B cell (primary cell): ENCODE measurements at regions of chr4 and their contacts with region 1.

Region 1: GRCh38 chr4:986879-987623 is at the start of gene IDUA:
- DNase-seq: peak; percentile 93
- ATAC-seq: peak; percentile 84
- H3K4me3 ChIP-seq: peak within 1 kb of the TSS; percentile 52 to 83 (median 68)
- H3K4me3 Mint-ChIP-seq: peak within 1 kb of the TSS; percentile 91
- H3K27ac ChIP-seq: peak within 1 kb of the TSS; percentile 19 to 76
- H3K27ac Mint-ChIP-seq: peak within 1 kb of the TSS; percentile 88
- H3K4me1 ChIP-seq: peaks cover 25 to 26% of the 10 kb centered on the region in 2 donors
- H3K4me1 Mint-ChIP-seq: peaks cover 23% of the 10 kb centered on the region
- H3K27me3 ChIP-seq: no peaks in the 10 kb centered on the region
- H3K27me3 Mint-ChIP-seq: no peaks in the 10 kb centered on the region
- CTCF ChIP-seq: peak; percentile 82
- total RNA-seq, gene IDUA: 57.8 and 67.4 TPM in 2 replicates

Region 2: DNA sequence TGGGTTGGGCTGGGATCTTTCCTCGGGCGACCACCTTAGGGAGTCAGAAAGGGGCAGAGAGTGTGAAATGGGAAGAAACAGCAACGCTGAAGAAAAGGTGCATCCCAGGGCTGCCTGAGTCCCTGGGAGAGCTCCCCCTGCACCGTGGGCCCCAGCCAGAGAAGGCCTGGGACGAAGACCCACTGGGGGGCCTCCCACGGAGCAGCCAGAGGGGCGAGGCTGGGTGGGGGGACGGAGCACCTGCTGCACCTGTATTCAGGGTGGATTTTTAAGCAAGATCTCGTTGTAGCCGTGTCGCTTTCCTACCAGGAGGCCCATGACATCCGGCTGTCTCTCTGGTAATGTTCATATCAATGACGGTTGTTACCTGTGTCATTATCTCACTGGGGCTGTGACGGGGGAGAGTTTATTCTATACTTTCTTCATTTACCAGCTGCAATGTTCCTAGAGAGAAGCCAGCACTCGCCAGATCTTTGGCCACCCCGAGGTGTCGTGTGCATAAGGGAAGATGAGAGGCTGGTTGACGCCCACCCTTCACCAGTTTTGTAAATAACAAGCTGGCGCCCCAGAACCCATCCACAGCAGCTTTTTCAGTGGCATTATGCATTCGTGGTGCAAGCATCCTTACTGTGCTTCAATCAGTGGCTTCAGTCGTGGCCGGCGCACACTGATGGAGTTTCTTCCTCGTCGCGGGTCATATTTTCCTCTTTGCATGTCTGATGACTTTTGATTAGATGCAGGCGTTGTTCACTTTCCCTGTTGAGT is 287.1 kb before region 1 on chr4:
- CTCF ChIA-PET with region 1: interaction called, 3 read pairs
- POLR2A ChIA-PET with region 1: no interaction called
- intact Hi-C with region 1: loop called (anchors 1 kb)
- DNase-seq: no peak
- ATAC-seq: no peak
- H3K4me3 ChIP-seq: peak overlapping the region in 1 of 5 experiments; percentile 48
- H3K4me3 Mint-ChIP-seq: peak overlapping the region; percentile 77
- H3K27ac ChIP-seq: peak overlapping the region; percentile 68 to 73
- H3K27ac Mint-ChIP-seq: peak overlapping the region; percentile 80
- H3K4me1 ChIP-seq: peaks cover 18 to 24% of the 10 kb centered on the region in 2 donors
- H3K4me1 Mint-ChIP-seq: peaks cover 22% of the 10 kb centered on the region
- H3K27me3 ChIP-seq: no peaks in the 10 kb centered on the region
- H3K27me3 Mint-ChIP-seq: no peaks in the 10 kb centered on the region
- CTCF ChIP-seq: no peak

Region 3: DNA sequence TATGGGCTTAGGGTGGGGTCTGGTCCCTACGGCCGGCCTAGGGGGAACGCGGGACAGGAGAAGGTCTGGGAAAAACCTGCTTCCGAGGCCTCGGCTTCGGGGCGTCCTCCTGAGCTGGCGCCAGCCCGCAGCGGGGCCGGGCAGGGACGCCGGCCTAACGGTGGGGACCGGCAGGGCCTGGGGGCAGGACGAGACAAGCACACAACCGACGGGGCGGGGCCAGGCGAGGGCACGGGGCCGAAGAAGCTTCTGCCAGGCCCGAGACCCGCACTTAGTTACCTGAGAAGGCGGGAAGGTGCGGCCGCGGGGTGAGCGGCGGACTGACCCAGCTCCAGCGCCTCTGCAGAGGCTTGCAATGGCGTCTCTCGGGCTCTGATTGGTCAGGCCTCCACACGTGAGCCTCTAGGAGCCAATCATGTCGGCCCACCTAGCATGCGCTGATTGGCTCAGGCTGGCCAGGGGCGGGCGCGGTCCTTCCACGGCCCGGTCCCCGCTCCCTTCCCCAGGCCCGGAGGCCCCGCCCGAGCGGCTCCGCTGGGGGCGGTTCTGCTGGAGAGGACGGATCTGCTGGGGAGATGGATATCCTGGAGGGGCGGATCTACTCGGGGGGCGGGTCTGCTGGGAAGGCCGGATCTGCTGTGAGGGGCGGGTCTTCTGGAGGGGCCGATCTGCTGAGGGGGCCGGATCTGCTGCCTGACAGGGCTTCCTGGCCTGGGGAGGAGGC is 205.4 kb before region 1 on chr4:
- CTCF ChIA-PET with region 1: interaction called, 13 read pairs
- POLR2A ChIA-PET with region 1: interaction called, 4 read pairs
- intact Hi-C with region 1: loop called (anchors 1 kb)
- DNase-seq: peak; percentile 99
- ATAC-seq: peak; percentile 94
- H3K4me3 ChIP-seq: peak overlapping the region; percentile 23 to 97 (median 85)
- H3K4me3 Mint-ChIP-seq: peak overlapping the region; percentile 94
- H3K27ac ChIP-seq: peak overlapping the region; percentile 82 to 95
- H3K27ac Mint-ChIP-seq: peak overlapping the region; percentile 91
- H3K4me1 ChIP-seq: peaks cover 38 to 40% of the 10 kb centered on the region in 2 donors
- H3K4me1 Mint-ChIP-seq: peaks cover 48% of the 10 kb centered on the region
- H3K27me3 ChIP-seq: peaks cover 0 to 26% (median 11%) of the 10 kb centered on the region in 4 experiments
- H3K27me3 Mint-ChIP-seq: peaks cover 18% of the 10 kb centered on the region
- CTCF ChIP-seq: no peak

Region 4: GRCh38 chr4:891747-892146 is 95.3 kb before region 1 on chr4:
- CTCF ChIA-PET with region 1: interaction called, 23 read pairs
- POLR2A ChIA-PET with region 1: interaction called, 3 read pairs
- intact Hi-C with region 1: loop called (anchors 5 kb)
- DNase-seq: no peak
- ATAC-seq: no peak
- H3K4me3 ChIP-seq: no peak overlapping the region
- H3K4me3 Mint-ChIP-seq: no peak overlapping the region
- H3K27ac ChIP-seq: no peak overlapping the region
- H3K27ac Mint-ChIP-seq: no peak overlapping the region
- H3K4me1 ChIP-seq: no peaks in the 10 kb centered on the region
- H3K4me1 Mint-ChIP-seq: no peaks in the 10 kb centered on the region
- H3K27me3 ChIP-seq: no peaks in the 10 kb centered on the region
- H3K27me3 Mint-ChIP-seq: no peaks in the 10 kb centered on the region
- CTCF ChIP-seq: no peak

Region 5: DNA sequence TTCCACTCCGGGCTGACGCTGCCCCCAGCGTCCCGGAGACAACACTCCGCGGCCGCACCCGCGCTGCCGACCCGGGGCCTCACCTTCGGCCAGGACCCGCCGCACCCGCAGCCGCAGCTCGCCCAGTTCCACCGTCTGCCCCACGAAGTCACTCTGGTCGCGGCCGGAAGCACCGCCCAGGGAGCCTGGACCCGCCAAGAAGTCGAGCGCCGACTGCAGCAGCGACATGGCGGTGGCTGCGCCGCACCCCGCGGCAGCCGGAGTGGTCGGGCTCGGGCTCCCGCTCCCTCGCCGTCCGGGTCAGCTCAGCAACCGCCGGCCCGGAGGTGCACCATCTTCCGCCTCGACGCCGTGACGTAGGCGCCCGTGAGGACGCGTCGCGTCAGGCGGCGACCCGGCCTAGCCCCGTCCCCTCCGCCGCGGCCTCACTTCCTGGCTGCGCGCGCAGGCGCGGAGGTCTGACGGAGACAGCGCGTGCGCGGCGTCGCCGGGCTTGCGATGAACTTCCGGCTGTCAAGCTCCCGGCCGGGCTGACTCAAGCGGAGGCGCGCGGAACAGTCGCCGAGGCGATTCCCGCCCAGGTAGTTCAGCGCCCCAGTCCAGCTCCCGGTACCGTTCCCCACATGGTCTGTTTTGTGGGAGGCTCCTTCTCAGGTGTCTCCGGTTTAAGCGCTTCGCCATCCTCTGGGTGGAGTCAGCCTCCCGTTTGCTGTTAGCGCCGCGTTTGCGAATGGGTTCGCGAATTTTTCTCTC is 54.9 kb before region 1 on chr4 and contains the starts of genes GAK and TMEM175:
- CTCF ChIA-PET with region 1: interaction called, 68 read pairs
- POLR2A ChIA-PET with region 1: interaction called, 8 read pairs
- intact Hi-C with region 1: loop called (anchors 1 kb)
- DNase-seq: peak; percentile 98
- ATAC-seq: peak; percentile 94
- H3K4me3 ChIP-seq: peak within 1 kb of the TSS; percentile 62 to 99 (median 93)
- H3K4me3 Mint-ChIP-seq: peak within 1 kb of the TSS; percentile 91
- H3K27ac ChIP-seq: peak within 1 kb of the TSS; percentile 62 to 98
- H3K27ac Mint-ChIP-seq: peak within 1 kb of the TSS; percentile 96
- H3K4me1 ChIP-seq: peaks cover 68 to 69% of the 10 kb centered on the region in 2 donors
- H3K4me1 Mint-ChIP-seq: peaks cover 83% of the 10 kb centered on the region
- H3K27me3 ChIP-seq: no peaks in the 10 kb centered on the region
- H3K27me3 Mint-ChIP-seq: no peaks in the 10 kb centered on the region
- CTCF ChIP-seq: no peak
- total RNA-seq, gene GAK: 283 and 302 TPM in 2 replicates
- total RNA-seq, gene TMEM175: 44.4 and 47.9 TPM in 2 replicates

Region 6: DNA sequence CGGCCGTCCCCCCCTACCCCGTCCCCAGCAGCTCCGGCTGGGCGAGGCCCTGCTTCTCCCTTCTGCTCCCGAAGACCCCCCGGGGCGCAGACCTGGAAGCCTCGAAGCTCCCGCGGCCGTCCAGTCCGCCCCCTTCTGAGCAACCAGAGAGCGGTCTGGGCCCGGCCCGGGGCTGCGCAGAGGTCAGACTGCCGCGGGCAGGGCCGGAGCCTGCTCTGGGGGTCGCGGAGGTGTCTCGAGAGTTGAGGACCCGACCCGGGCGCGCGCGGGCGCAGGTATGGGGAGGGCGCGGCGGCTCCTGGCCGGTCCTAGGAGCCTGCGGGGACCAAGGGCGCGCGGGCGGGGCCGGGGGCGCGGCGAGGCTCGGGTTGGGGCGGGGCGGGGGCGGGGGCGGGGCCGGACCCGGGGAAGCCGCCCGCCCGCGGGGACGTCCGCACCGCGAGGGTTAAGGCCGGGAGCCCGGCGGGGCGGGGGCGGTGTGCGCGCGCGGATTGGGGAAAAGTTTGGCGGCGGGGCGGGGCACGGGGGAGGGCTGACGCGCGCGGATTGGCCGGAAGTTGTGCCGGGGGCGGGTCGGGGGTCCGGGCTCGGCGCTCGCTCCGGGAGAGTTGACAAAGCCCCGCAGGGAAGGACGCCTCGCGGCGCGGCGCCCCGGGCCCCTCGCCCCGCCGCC is 24.1 kb after region 1 on chr4 and contains the start of gene FGFRL1:
- CTCF ChIA-PET with region 1: no interaction called
- POLR2A ChIA-PET with region 1: interaction called, 4 read pairs
- intact Hi-C with region 1: loop called (anchors 2 kb)
- DNase-seq: peak; percentile 92
- ATAC-seq: peak; percentile 63
- H3K4me3 ChIP-seq: peak within 1 kb of the TSS in 4 of 5 experiments; percentile 60 to 74 (median 66)
- H3K4me3 Mint-ChIP-seq: peak within 1 kb of the TSS; percentile 91
- H3K27ac ChIP-seq: peak within 1 kb of the TSS; percentile 36 to 38
- H3K27ac Mint-ChIP-seq: peak within 1 kb of the TSS; percentile 89
- H3K4me1 ChIP-seq: peaks cover 24 to 30% of the 10 kb centered on the region in 2 donors
- H3K4me1 Mint-ChIP-seq: peaks cover 20% of the 10 kb centered on the region
- H3K27me3 ChIP-seq: peaks cover 0 to 24% (median 12%) of the 10 kb centered on the region in 4 experiments
- H3K27me3 Mint-ChIP-seq: peaks cover 29% of the 10 kb centered on the region
- CTCF ChIP-seq: no peak
- total RNA-seq, gene FGFRL1: 28.5 and 28.9 TPM in 2 replicates